Activated CD4-positive, alpha-beta memory T cell treated with anti-CD3 and anti-CD28 coated beads, Interleukin-2, amount 10 ng/mL, durations not matched to agents 7 days and 5 days (primary cell): ENCODE measurements at regions of chr14 and their contacts with region 1.

Region 1: GRCh38 chr14:80954687-80955299 is 628 bp upstream of the TSHR start:
- DNase-seq: peak; percentile 79
- H3K4me3 Mint-ChIP-seq: peak overlapping the region; percentile 78
- H3K27ac Mint-ChIP-seq: peak overlapping the region; percentile 37
- H3K4me1 Mint-ChIP-seq: peaks cover 51% of the 10 kb centered on the region
- H3K27me3 Mint-ChIP-seq: peaks cover 20% of the 10 kb centered on the region

Region 2: GRCh38 chr14:80930836-80931389 is 23.9 kb before region 1 on chr14:
- CTCF ChIA-PET with region 1: interaction called, 12 read pairs
- POLR2A ChIA-PET with region 1: interaction called, 17 read pairs
- DNase-seq: peak; percentile 70
- H3K4me3 Mint-ChIP-seq: peak overlapping the region; percentile 42
- H3K27ac Mint-ChIP-seq: peak overlapping the region; percentile 88
- H3K4me1 Mint-ChIP-seq: peaks cover 64% of the 10 kb centered on the region
- H3K27me3 Mint-ChIP-seq: no peaks in the 10 kb centered on the region

Region 3: GRCh38 chr14:80941241-80942182 is 13.3 kb before region 1 on chr14 and contains the start of gene CEP128:
- CTCF ChIA-PET with region 1: interaction called, 12 read pairs
- POLR2A ChIA-PET with region 1: interaction called, 42 read pairs
- DNase-seq: peak; percentile 92
- H3K4me3 Mint-ChIP-seq: peak within 1 kb of the TSS; percentile 88
- H3K27ac Mint-ChIP-seq: peak within 1 kb of the TSS; percentile 66
- H3K4me1 Mint-ChIP-seq: peaks cover 32% of the 10 kb centered on the region
- H3K27me3 Mint-ChIP-seq: no peaks in the 10 kb centered on the region
- total RNA-seq, gene CEP128: 24.7 to 26.0 TPM

Region 4: DNA sequence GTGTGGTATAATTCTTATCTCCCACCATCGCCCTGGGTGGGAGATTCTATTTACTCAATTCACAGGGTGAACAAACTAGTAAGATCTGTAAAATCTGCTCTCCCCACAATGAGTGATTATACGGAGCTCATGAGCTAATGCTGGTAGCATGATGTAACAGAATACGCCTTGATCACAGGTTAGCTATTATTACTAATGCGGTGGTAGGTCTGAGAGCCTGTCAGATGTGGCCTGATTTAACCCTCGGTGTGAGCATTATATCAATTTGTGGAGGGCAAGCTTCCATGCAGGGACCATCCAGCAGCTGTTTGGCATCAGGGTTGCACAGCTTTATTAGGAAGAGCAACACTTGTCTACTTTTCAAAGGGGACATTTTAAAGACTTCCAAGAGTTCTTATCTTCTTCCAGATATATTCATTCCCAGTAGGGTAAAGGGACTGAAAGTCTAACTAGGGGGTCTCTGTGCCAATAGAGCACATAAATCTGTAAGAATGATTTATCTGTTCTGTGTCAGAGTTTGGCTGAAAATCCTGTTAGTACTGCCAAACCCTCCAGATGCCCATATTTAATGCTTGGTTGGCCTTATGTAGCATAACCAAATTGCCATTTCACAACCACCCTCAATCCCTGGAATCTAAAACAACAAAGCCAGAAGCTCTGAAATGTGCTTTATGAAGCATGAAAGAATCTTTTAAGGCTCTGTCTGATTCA is 19.3 kb after region 1 on chr14:
- CTCF ChIA-PET with region 1: interaction called, 11 read pairs
- POLR2A ChIA-PET with region 1: interaction called, 30 read pairs
- DNase-seq: no peak
- H3K4me3 Mint-ChIP-seq: no peak overlapping the region
- H3K27ac Mint-ChIP-seq: no peak overlapping the region
- H3K4me1 Mint-ChIP-seq: peaks cover 45% of the 10 kb centered on the region
- H3K27me3 Mint-ChIP-seq: peaks cover 16% of the 10 kb centered on the region